Activated CD4-positive, alpha-beta memory T cell treated with anti-CD3 and anti-CD28 coated beads, Interleukin-2, amount 10 ng/mL, durations not matched to agents 7 days and 5 days (primary cell): ENCODE measurements at regions of chr2 and their contacts with region 1.

Region 1: DNA sequence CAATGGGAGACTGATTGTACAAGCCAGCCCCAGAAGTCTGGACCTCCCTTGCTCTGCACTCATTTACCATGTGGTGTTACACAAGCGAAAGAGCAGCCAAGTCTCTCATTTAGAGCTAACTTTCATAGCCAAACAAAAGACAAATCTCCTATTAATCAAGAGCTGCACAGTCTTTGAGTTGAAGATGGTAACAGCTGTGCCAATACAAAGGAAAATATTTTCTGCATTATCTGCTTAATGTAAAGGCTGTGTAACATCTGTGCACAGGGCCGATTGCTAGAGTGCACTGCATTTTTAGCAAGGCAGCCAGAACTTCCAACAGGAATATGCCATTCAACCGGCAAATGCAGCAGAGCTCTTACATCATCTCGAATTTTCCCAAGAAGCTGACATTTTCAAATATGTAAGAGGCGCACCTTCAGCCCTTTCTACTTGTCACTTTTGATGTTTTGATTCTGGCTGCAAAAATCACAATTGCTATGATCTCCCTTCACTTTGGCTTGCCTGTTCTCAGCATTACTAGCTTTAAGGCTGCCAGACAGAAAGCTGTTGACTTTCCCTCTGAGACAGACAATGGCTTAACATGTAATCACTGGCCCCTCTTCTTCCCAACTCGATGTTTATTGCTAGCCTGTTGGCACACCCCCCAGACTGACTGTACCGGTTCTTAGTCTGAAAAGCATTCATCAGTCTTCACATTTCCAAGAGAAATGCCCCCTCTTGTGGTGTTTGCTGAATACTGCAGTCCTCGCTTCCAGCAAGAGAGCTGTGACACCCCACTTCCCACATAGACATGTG is 96.9 kb upstream of the TANK start:
- DNase-seq: peak; percentile 68
- H3K4me3 Mint-ChIP-seq: no peak overlapping the region
- H3K27ac Mint-ChIP-seq: no peak overlapping the region
- H3K4me1 Mint-ChIP-seq: peaks cover 15% of the 10 kb centered on the region
- H3K27me3 Mint-ChIP-seq: peaks cover 2% of the 10 kb centered on the region

Region 2: DNA sequence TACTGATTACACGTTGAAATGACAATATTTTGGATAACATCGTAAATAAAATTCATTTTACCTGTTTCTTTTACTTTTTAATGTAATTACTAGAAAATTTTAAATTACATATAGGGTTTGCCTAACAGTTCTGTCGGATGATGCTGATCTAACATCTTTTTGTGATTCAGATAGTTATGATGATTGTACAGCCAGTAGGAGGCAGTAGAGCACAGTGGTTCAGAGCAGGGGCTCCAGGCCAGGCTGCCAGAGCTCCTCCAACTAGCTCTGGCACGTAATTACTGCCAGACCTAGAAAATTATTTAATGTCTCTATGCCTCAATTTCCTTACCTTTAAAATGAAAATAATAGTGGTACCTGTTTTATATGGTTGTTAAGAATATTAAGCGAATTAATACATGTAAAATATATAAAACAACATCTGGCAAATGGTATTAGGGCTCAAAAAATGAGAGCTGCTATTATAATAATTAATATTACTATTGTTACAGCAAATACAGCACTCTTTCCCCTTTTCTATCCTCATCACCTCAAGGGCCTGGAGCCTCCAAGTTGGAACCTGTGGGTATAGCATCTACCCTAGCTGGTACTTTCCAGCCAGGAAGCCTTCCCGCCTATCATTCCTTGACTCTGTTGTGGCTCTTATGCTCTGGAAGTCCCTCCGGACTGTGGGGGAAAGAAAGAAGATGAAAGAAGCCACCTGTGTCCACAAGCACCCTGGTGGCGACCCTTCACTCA is 953.3 kb before region 1 on chr2:
- CTCF ChIA-PET with region 1: interaction called, 13 read pairs
- POLR2A ChIA-PET with region 1: no interaction called
- DNase-seq: peak; percentile 49
- H3K4me3 Mint-ChIP-seq: no peak overlapping the region
- H3K27ac Mint-ChIP-seq: no peak overlapping the region
- H3K4me1 Mint-ChIP-seq: no peaks in the 10 kb centered on the region
- H3K27me3 Mint-ChIP-seq: peaks cover 10% of the 10 kb centered on the region

Region 3: DNA sequence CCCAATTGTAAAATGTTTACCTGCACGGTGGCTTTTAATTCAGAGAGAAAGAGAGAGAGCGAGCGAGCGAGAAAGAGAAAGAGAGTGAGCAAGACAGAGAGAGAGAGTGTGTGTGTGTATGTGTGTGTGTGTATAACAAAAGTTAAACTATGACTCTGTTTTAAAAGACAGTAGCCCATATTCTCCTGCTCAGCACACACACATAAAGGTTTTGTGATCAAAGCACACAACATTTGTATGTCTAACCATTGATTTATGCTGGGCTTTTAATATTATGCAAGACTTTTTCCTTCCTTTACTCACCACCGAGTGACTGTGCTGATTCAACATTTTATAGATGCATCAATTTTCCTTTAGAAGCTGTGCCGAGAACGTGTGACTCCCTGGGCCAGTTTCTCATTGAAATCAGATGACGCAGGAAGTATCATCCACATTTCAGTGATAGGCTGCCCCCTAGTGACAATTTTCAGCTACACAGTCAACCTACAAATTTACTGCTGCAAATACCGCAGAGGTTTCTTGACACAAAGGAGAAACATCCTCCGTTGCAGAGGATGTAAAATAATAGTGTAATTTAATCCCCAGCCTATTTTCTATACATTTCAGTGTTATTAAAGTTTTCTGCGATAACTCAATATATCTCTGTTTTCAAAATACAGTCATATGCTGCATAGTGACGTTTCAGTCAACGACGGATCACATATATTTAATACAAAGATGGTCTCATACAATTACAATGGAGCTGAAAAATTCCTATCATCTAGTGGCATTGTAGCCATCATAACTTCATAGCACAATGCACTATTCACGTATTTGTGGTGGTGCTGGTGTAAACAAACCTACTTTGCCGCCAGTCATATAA is 69.0 kb before region 1 on chr2:
- CTCF ChIA-PET with region 1: interaction called, 37 read pairs
- POLR2A ChIA-PET with region 1: no interaction called
- DNase-seq: peak; percentile 71
- H3K4me3 Mint-ChIP-seq: no peak overlapping the region
- H3K27ac Mint-ChIP-seq: no peak overlapping the region
- H3K4me1 Mint-ChIP-seq: peaks cover 7% of the 10 kb centered on the region
- H3K27me3 Mint-ChIP-seq: no peaks in the 10 kb centered on the region

Region 4: DNA sequence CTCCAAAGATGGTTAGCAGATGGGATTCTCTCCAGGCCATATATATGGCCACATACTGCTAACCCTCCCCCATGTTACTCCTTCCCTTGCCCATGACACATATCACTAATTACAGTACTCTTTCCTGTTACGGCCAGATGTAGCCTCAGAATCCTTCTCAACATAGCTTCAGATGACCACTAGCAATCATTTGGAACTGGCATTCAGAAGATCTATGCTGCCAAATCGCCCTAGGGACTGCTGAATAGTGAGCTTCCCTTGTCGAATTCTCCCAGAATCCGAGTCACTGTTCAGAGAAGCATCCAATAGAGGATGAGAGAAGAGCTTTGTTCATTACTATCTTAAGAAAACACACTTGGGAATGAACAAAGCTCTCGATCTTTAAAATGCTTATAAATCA is 24.3 kb before region 1 on chr2:
- CTCF ChIA-PET with region 1: interaction called, 10 read pairs
- POLR2A ChIA-PET with region 1: no interaction called
- DNase-seq: no peak
- H3K4me3 Mint-ChIP-seq: no peak overlapping the region
- H3K27ac Mint-ChIP-seq: no peak overlapping the region
- H3K4me1 Mint-ChIP-seq: no peaks in the 10 kb centered on the region
- H3K27me3 Mint-ChIP-seq: peaks cover 14% of the 10 kb centered on the region

Region 5: GRCh38 chr2:161090411-161090810 is 27.1 kb after region 1 on chr2:
- CTCF ChIA-PET with region 1: interaction called, 20 read pairs
- POLR2A ChIA-PET with region 1: interaction called, 7 read pairs
- DNase-seq: peak; percentile 67
- H3K4me3 Mint-ChIP-seq: peak overlapping the region; percentile 45
- H3K27ac Mint-ChIP-seq: peak overlapping the region; percentile 77
- H3K4me1 Mint-ChIP-seq: peaks cover 50% of the 10 kb centered on the region
- H3K27me3 Mint-ChIP-seq: no peaks in the 10 kb centered on the region

Region 6: DNA sequence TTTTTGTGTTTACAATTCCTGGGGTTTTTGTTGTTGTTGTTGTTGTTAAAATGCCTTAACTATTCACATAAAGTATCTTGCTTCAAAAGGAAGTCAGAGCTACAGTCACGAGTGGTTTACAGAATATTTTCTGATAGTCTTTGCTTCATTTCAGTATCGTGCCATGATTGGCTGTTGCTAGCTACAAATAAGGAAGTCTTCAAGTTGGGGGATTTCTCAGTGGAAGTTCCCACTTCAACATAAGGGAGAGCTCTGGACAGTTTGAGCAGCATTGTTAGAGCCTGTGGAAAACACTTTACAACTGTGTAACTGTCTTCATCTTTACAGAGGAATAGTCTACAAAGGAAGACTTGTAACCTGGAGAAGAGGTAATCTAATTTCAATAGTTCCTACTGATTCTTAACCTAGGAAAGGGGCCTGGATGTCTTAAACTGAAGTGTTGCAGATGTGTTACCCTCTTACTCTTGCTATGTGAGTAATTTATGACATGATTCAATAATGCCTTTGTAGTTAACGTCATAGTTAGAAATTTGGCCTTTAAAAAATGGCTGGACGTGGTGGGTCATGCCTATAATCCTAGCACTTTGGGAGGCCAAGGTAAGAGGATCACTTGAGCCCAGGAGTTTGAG is 73.5 kb after region 1 on chr2:
- CTCF ChIA-PET with region 1: interaction called, 12 read pairs
- POLR2A ChIA-PET with region 1: interaction called, 9 read pairs
- DNase-seq: no peak
- H3K4me3 Mint-ChIP-seq: peak overlapping the region; percentile 89
- H3K27ac Mint-ChIP-seq: peak overlapping the region; percentile 87
- H3K4me1 Mint-ChIP-seq: peaks cover 51% of the 10 kb centered on the region
- H3K27me3 Mint-ChIP-seq: no peaks in the 10 kb centered on the region

Region 7: DNA sequence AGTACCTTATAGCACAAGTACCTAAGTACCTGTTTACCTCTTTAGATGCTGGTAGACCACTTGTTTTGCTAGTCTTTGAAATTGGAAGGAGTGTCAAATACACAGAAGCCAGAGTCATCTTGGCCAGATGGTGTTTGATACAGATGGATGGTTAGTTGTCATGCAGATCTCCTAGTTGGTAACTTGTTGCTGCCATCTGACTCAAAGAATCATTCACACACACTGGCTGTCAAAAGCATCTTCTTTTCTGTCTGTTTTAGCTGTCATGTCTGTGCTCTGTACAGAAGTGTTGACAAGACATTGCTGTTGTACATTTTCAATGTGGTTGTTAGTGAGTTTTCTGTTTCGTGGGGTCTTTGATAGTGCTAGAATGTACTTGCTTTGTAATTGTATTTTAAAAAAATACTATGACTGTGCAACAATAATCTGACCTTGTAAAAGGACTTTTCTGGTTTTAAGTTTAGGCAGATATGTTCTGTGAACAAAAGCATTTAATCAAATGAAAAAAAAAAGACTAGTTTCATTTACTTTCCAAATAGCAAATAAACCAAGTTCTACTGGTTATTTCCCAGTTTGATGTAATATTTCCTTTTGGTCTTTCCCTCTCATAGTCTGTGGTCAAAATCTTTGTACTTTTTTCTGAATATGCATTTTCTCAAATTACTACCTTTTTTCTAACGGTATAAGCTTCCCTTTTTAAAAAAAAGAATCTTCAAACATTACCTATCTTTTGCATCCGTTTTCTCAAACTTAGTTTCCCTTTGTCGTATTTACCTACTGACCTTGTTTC is 136.8 kb after region 1 on chr2:
- CTCF ChIA-PET with region 1: no interaction called
- POLR2A ChIA-PET with region 1: no interaction called
- DNase-seq: no peak
- H3K4me3 Mint-ChIP-seq: peak overlapping the region; percentile 59
- H3K27ac Mint-ChIP-seq: peak overlapping the region; percentile 77
- H3K4me1 Mint-ChIP-seq: peaks cover 37% of the 10 kb centered on the region
- H3K27me3 Mint-ChIP-seq: no peaks in the 10 kb centered on the region